OCI-LY7 (cell line): ENCODE measurements at regions of chr9 and their contacts with region 1.

Region 1: DNA sequence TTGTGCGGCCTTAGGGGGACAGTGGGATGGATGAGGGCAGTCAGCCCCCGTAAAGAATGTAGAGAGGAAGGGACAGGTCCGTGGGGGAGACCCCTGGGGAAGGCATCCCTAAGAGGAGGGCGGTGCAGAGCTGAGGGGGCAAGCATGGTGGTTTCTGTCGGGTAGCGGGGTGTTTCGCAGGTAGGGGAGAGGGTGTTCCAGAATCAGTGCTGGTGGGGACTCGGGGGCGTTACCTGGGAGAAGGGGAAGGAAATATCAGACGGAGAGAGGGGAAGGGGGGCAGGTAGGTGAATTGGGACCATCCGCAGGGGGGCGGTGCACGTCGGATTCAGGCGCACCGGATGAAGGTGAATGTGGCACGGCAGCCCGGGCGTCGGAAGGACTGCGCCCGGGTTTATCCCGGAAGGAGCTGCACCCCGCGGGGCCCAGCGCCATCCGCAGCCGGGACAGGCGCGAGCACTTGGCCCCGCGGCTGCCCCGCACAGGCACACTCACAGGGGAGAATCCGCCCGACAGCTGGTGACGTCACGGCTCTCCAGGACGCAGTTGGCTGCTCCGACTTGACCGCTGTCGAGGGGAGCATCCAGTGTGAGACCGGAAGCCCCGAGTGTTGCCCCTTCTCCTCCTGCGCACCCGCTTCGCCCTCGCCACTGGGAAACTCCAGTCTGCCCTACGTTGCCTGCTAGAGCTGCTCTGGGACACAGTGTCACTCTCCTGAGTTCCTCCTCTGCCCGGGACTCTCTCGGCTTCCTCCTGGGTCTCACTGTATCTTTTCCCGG is 1.3 kb downstream of the CD72 start:
- DNase-seq: peak; percentile 79
- H3K4me3 ChIP-seq: peak overlapping the region; percentile 69
- H3K27ac ChIP-seq: peak overlapping the region; percentile 92
- H3K4me1 ChIP-seq: peaks cover 63% of the 10 kb centered on the region
- CTCF ChIP-seq: peak; percentile 65

Region 2: DNA sequence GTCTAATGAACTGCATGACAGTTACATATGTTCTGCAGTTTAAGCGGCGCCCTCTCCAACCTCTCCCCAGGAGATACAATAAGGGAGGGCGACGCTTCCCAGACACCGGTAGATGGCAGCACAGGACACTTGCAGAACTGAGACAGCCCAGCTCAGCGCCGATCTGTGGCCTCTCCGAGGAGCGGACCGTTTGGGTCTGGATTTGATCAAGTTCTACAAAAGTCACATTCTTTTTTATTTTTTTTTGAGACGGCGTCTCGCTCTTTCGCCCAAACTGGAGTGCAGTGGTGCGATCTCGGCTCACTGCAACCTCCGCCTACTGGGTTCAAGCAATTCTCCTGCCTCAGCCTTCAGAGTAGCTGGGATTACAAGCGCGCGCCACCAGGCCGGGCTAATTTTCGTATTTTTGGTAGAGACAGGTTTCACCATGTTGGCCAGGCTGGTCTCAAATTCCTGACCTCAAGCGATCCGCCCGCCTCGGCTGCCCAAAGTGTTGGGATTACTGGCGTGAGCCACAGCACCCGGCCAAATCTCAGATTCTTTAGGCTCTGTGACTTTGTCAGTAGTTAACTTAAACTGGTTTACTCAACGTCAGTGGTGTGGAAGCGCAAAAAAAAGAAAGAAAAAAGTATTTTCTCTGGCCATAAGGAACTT is 499.8 kb before region 1 on chr9:
- CTCF ChIA-PET with region 1: no interaction called
- POLR2A ChIA-PET with region 1: no interaction called
- intact Hi-C with region 1: loop called (anchors 5 kb)
- DNase-seq: peak; percentile 92
- H3K4me3 ChIP-seq: peak overlapping the region; percentile 74
- H3K27ac ChIP-seq: peak overlapping the region; percentile 73
- H3K4me1 ChIP-seq: peaks cover 31% of the 10 kb centered on the region
- CTCF ChIP-seq: peak; percentile 90

Region 3: DNA sequence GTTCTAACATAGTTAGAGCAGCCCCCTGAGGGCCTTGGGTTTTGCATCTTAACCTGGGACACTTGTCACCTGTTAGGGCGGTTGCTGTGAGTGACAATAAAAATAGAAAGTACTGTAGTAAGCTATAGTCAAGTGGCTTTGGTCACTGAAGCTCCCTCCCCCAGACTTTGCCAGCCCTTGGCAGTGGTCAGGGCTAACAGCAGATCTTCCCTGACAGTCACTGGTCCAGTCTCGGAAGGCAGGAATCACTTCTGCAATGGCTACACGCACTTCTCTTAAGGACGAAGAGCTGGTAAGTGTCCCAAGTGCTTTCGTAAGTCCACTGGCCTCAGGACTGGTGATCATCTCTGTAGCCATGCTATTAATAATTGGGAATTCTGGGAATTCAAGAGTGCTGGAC is 242.0 kb before region 1 on chr9:
- CTCF ChIA-PET with region 1: no interaction called
- POLR2A ChIA-PET with region 1: no interaction called
- intact Hi-C with region 1: no loop called
- DNase-seq: no peak
- H3K4me3 ChIP-seq: no peak overlapping the region
- H3K27ac ChIP-seq: no peak overlapping the region
- H3K4me1 ChIP-seq: no peaks in the 10 kb centered on the region
- CTCF ChIP-seq: no peak

Region 4: GRCh38 chr9:35636135-35636876 is 19.4 kb after region 1 on chr9:
- CTCF ChIA-PET with region 1: no interaction called
- POLR2A ChIA-PET with region 1: interaction called, 37 read pairs
- intact Hi-C with region 1: loop called (anchors 1 kb)
- DNase-seq: peak; percentile 82
- H3K4me3 ChIP-seq: peak overlapping the region; percentile 28
- H3K27ac ChIP-seq: peak overlapping the region; percentile 94
- H3K4me1 ChIP-seq: peaks cover 71% of the 10 kb centered on the region
- CTCF ChIP-seq: no peak

Region 5: GRCh38 chr9:35657546-35658136 is 40.8 kb after region 1 on chr9 and contains the start of gene RMRP:
- CTCF ChIA-PET with region 1: interaction called, 3 read pairs
- POLR2A ChIA-PET with region 1: interaction called, 28 read pairs
- intact Hi-C with region 1: loop called (anchors 2 kb)
- DNase-seq: peak; percentile 96
- H3K4me3 ChIP-seq: peak within 1 kb of the TSS; percentile 81
- H3K27ac ChIP-seq: peak within 1 kb of the TSS; percentile 84
- H3K4me1 ChIP-seq: peaks cover 64% of the 10 kb centered on the region
- CTCF ChIP-seq: 0 out of 2 replicates have a peak, but pooled peaks have one; percentile 27
- total RNA-seq, gene RMRP: 21,739 and 26,575 TPM in 2 replicates

Region 6: GRCh38 chr9:35756275-35757225 is 139.7 kb after region 1 on chr9:
- CTCF ChIA-PET with region 1: no interaction called
- POLR2A ChIA-PET with region 1: no interaction called
- intact Hi-C with region 1: loop called (anchors 5 kb)
- DNase-seq: peak; percentile 91
- H3K4me3 ChIP-seq: peak overlapping the region; percentile 74
- H3K27ac ChIP-seq: peak overlapping the region; percentile 94
- H3K4me1 ChIP-seq: peaks cover 66% of the 10 kb centered on the region
- CTCF ChIP-seq: peak; percentile 84